ENCODE measurements at regions of chr10 and their contacts with region 1.

Region 1: GRCh38 chr10:59465088-59465487 is 102.7 kb upstream of the FAM13C start:
- DNase-seq: peak in 2 of 10 donors; percentile 5 to 37
- H3K4me3 ChIP-seq: no peak overlapping the region
- H3K27ac ChIP-seq: peak overlapping the region in 3 of 59 donors; percentile 7 to 48 (median 23)
- H3K27me3 ChIP-seq: no peaks in the 10 kb centered on the region
- CTCF ChIP-seq: peak; percentile 15 to 81 (median 64)

Region 2: GRCh38 chr10:58781873-58782488 is 683.1 kb before region 1 on chr10:
- intact Hi-C with region 1: loop called in 1 of 2 experiments (anchors 10 kb)
- DNase-seq: no peak
- H3K4me3 ChIP-seq: peak overlapping the region in 1 of 59 donors; percentile 11
- H3K27ac ChIP-seq: peak overlapping the region in 9 of 59 donors; percentile 22 to 64 (median 33)
- H3K27me3 ChIP-seq: no peaks in the 10 kb centered on the region
- CTCF ChIP-seq: peak; percentile 44 to 91 (median 77)

Region 3: DNA sequence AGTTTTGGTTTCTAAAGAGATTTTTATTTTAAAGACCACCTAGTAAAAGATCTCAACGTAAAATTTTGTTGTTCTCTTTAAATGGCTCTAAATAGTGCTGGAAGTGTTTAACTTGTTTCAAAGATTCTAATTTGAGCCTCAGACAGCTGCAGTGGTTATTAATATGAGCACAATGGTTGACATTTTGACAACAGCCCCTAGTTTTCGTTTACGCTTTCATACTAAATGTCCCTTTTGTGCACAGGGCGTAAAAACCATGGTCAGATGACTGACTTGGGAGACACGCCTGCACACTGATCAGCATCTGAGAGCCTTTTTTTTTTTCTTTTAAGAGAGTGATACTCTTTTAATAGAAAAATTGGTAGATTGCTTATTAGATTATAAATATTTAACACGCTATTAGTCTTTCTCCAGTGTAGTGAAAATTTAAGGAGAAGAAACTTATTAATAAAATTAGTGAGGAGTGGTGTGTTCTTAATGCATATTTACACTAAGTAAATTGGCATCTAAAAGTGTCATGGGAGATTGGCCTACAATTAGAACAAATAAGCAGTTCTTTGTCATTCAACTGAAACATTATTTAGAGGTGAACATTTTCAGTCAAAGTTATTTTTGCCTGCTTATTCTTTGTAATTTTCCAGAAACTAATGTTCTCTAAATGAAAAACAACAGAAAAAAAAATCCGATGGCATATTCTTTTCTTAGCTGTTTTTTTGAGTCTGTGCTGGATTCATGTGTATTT is 471.4 kb before region 1 on chr10:
- intact Hi-C with region 1: no loop called
- DNase-seq: peak in 3 of 10 donors; percentile 59 to 82 (median 65)
- H3K4me3 ChIP-seq: peak overlapping the region in 17 of 59 donors; percentile 1 to 49 (median 18)
- H3K27ac ChIP-seq: peak overlapping the region; percentile 77 to 100 (median 98)
- H3K27me3 ChIP-seq: no peaks in the 10 kb centered on the region
- CTCF ChIP-seq: peak in 3 of 56 donors; percentile 7 to 16 (median 14)

Region 4: DNA sequence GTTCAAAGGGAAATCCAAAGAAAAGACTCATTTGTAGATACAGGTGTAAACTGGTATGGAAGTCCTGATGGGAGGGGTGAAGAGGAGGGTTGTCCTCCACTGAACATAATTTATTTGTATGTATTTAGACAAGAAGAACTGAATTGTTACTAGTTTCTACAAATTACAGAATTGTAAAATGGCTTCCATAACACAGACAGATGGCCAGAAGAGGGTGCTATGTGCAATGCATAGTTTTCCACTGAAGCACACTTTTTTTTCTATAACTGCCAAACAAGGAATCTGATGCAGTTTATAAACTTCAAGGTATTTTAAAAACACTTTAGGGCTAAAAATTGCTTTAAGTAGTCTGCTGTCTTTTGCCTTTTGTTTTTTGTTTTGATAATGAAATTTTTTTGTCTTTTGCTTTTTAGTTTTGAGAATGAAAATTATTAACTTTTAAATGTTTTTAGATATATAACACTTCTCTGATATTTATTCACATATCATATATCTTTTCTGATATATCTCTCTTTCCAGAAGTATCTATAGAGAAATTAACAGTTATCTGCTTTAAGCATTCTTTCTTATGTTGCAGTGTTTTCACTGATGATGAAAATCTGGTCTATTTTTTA is 230.2 kb before region 1 on chr10:
- intact Hi-C with region 1: loop called (anchors 2 to 5 kb)
- DNase-seq: no peak
- H3K4me3 ChIP-seq: no peak overlapping the region
- H3K27ac ChIP-seq: peak overlapping the region in 39 of 59 donors; percentile 0 to 84 (median 47)
- H3K27me3 ChIP-seq: no peaks in the 10 kb centered on the region
- CTCF ChIP-seq: peak; percentile 34 to 83 (median 68)

Region 5: DNA sequence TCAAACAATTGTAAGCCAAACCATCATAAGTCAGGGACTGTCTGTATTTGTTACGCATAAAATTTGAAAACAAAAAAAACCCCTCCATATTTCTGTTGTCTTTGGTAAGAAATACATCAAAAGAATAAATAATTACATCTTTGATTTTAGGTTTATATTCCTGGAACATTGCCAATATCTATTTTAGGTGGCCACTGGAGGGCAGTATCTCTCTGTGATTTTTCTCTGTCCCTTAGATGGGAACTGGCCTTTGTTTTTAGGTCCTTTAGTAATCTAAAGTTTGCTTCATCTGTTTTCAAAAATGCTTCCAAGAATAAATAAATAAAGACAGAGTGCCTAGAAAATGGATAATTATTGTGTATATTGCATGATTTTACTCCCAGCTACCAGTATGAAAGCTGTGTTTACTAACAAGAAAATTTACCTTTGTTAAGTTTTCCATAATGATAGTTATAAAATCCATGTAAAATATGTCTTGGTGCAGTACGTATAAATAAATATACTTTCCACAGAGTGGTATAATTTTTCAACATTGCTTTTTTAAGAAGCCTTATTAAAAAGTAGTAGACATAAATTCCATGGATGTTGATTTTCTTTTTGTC is 224.4 kb before region 1 on chr10:
- intact Hi-C with region 1: loop called (anchors 2 to 5 kb)
- DNase-seq: no peak
- H3K4me3 ChIP-seq: no peak overlapping the region
- H3K27ac ChIP-seq: peak overlapping the region in 57 of 59 donors; percentile 7 to 84 (median 68)
- H3K27me3 ChIP-seq: no peaks in the 10 kb centered on the region
- CTCF ChIP-seq: peak; percentile 63 to 95 (median 82)

Region 6: GRCh38 chr10:59362144-59362958 is 102.7 kb before region 1 on chr10 and contains the start of gene FAM13C:
- intact Hi-C with region 1: loop called (anchors 10 kb)
- DNase-seq: peak; percentile 71 to 87 (median 83)
- H3K4me3 ChIP-seq: peak within 1 kb of the TSS; percentile 48 to 87 (median 74)
- H3K27ac ChIP-seq: peak within 1 kb of the TSS; percentile 92 to 99 (median 98)
- H3K27me3 ChIP-seq: no peaks in the 10 kb centered on the region
- CTCF ChIP-seq: peak in 14 of 56 donors; percentile 6 to 38 (median 14)
- total RNA-seq, gene FAM13C: 54.6 to 219 (median 93.7) TPM

Region 7: GRCh38 chr10:59580026-59580863 is 115.2 kb after region 1 on chr10:
- intact Hi-C with region 1: loop called in 1 of 2 experiments (anchors 10 kb)
- DNase-seq: no peak
- H3K4me3 ChIP-seq: peak overlapping the region in 1 of 59 donors; percentile 22
- H3K27ac ChIP-seq: peak overlapping the region in 33 of 59 donors; percentile 2 to 81 (median 46)
- H3K27me3 ChIP-seq: no peaks in the 10 kb centered on the region
- CTCF ChIP-seq: peak; percentile 35 to 86 (median 72)

Region 8: DNA sequence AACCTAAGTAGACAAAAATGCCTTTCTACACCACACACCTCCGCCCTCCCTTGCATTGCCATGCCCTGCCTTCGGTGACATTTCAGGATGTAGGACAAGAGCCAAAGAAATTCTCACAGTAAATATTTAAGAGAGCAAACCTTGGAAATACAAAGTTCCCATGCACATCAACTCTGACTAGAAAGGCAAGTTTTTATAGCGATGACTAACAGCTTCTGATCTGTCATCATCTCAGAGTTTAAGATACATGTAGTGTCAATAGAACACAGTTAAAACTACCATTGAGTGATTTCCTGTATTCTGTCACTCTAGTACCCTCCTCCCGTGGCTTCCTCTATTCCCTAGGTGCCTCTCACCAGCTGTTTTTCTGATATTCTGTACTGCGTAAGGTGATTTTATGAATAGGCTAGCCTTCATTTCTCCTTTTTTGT is 223.8 kb after region 1 on chr10:
- intact Hi-C with region 1: no loop called
- DNase-seq: no peak
- H3K4me3 ChIP-seq: no peak overlapping the region
- H3K27ac ChIP-seq: no peak overlapping the region
- H3K27me3 ChIP-seq: peaks cover 0 to 3% (median 0%) of the 10 kb centered on the region in 45 donors
- CTCF ChIP-seq: no peak

Measured in dorsolateral prefrontal cortex (tissue), 120 donors.